GM12878 (cell line): ENCODE measurements at regions of chr7 and their contacts with region 1.

Region 1: DNA sequence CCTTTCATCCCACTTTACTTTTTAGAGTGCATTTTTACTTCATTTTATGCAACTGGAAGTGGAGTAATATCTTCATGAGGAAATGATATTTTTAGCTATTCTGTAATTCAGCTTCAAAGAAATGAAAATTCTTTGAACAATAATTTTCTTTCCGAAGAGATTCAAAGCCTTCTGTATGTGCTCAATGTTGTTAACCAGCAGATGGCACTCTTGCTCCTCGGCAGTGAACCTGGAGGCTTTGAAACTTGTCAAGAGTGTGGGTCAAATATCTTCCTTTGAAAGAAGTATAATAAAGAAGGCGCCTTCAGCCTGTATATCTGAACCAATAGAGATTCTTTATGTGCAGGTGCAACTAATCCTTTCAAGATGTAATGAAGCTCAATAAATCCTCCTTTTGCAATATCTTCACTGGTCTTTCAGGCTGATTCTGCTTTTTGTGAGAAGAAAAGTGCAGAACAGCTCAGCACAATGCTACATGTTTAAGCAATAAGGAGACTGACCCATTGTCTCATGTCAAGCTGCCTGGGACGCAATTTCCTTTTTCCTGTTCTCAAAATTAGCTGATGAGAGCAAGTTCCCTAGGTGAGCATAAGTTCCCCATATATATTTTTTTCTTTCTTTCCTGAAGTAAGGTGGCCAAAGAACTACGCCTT is 258.4 kb downstream of the SEMA3A start:
- DNase-seq: no peak
- ATAC-seq: peak; percentile 92
- H3K4me3 ChIP-seq: no peak overlapping the region
- H3K27ac ChIP-seq: no peak overlapping the region
- H3K4me1 ChIP-seq: no peaks in the 10 kb centered on the region
- H3K27me3 ChIP-seq: no peaks in the 10 kb centered on the region; a peak in 1 of 4 replicates
- CTCF ChIP-seq: peak; percentile 81 to 88 (median 88)
- EP300 ChIP-seq: no peak
- POLR2A ChIP-seq: no peak
- RAD21 ChIP-seq: peak; percentile 95

Region 2: DNA sequence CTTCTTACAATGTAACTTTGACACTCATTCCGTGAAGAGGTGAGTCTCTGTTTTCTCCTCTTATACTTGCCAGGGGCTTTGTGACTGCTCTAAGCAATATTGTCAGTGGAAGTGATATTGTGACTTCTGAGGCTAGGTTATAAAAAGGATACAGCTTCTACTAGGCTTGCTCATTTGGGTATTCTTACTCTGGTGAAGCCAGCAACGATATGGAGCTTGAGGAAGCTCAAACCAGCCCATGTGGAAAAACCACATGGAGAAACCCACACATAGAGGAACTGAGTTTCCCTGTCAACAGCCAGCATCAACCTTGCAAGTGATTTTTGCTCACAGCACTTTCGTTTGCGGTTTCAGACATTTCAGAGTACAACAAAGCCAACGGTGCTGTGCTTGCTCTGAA is 137.7 kb before region 1 on chr7:
- CTCF ChIA-PET with region 1: no interaction called
- POLR2A ChIA-PET with region 1: no interaction called
- RAD21 ChIA-PET with region 1: no interaction called
- SMC1A ChIA-PET with region 1: interaction called, 4 read pairs
- in situ Hi-C with region 1: no loop called
- intact Hi-C with region 1: loop called (anchors 5 kb)
- DNase-seq: peak; percentile 55
- ATAC-seq: peak; percentile 82
- H3K4me3 ChIP-seq: no peak overlapping the region
- H3K27ac ChIP-seq: peak overlapping the region; percentile 9; the same call in 1 of the 2 replicates
- H3K4me1 ChIP-seq: peaks cover 18% of the 10 kb centered on the region
- H3K27me3 ChIP-seq: no peaks in the 10 kb centered on the region
- CTCF ChIP-seq: no peak
- EP300 ChIP-seq: peak; percentile 30 to 55; a peak in 1 of 4 replicates
- POLR2A ChIP-seq: no peak
- RAD21 ChIP-seq: no peak

Region 3: GRCh38 chr7:83824214-83824613 is 112.0 kb before region 1 on chr7:
- CTCF ChIA-PET with region 1: no interaction called
- POLR2A ChIA-PET with region 1: no interaction called
- RAD21 ChIA-PET with region 1: no interaction called
- SMC1A ChIA-PET with region 1: no interaction called
- in situ Hi-C with region 1: no loop called
- intact Hi-C with region 1: no loop called
- DNase-seq: no peak
- ATAC-seq: no peak
- H3K4me3 ChIP-seq: no peak overlapping the region
- H3K27ac ChIP-seq: no peak overlapping the region
- H3K4me1 ChIP-seq: no peaks in the 10 kb centered on the region
- H3K27me3 ChIP-seq: no peaks in the 10 kb centered on the region
- CTCF ChIP-seq: no peak
- EP300 ChIP-seq: no peak
- POLR2A ChIP-seq: no peak
- RAD21 ChIP-seq: no peak

Region 4: DNA sequence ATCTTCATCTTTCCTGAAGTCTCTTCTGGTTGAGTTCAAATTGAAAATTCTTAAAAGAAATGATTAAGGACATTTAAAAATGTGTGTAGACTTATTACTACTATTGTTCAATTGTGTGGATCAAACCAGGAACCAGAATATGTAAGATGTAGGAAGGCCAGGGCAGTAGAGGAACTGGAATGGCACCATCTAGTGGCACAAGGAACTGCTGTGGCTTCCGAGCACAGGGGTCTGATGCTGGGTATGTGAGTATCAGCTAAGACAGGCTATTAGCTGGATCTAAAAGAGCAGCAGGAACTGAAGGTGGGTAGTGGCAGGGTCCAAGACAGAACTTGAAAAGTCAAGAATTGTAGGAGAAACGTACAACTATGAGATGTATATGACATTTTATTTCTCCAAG is 11.1 kb after region 1 on chr7:
- CTCF ChIA-PET with region 1: interaction called, 153 read pairs
- POLR2A ChIA-PET with region 1: no interaction called
- RAD21 ChIA-PET with region 1: interaction called, 4 read pairs
- SMC1A ChIA-PET with region 1: interaction called, 39 read pairs
- in situ Hi-C with region 1: no loop called
- intact Hi-C with region 1: no loop called
- DNase-seq: no peak
- ATAC-seq: peak; percentile 98
- H3K4me3 ChIP-seq: no peak overlapping the region
- H3K27ac ChIP-seq: no peak overlapping the region
- H3K4me1 ChIP-seq: no peaks in the 10 kb centered on the region
- H3K27me3 ChIP-seq: no peaks in the 10 kb centered on the region
- CTCF ChIP-seq: peak; percentile 49 to 70 (median 62)
- EP300 ChIP-seq: no peak
- POLR2A ChIP-seq: no peak
- RAD21 ChIP-seq: peak; percentile 54

Region 5: DNA sequence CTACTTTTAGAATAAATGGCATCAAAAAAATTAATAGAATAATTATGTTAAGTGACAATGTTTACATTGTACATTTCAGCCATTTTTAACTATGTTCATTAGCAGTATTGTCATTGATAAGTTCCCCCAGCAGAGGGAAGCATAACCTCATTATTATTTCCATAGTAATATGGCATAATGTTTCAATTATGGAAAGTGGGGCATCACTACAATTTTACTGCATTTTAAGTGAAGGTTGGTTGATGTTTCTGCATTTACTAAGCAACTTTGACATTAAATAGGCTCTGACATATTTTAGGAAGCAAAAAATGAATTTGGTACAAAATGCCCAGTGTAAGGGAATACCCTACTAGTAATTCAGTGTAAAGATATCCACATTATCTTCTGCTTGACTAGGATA is 40.1 kb after region 1 on chr7:
- CTCF ChIA-PET with region 1: interaction called, 16 read pairs
- POLR2A ChIA-PET with region 1: interaction called, 3 read pairs
- RAD21 ChIA-PET with region 1: interaction called, 6 read pairs
- SMC1A ChIA-PET with region 1: interaction called, 9 read pairs
- in situ Hi-C with region 1: no loop called
- intact Hi-C with region 1: loop called (anchors 5 kb)
- DNase-seq: no peak
- ATAC-seq: peak; percentile 86
- H3K4me3 ChIP-seq: no peak overlapping the region
- H3K27ac ChIP-seq: no peak overlapping the region
- H3K4me1 ChIP-seq: no peaks in the 10 kb centered on the region
- H3K27me3 ChIP-seq: no peaks in the 10 kb centered on the region
- CTCF ChIP-seq: peak; percentile 23 to 67 (median 40); a peak in 4 of 6 replicates
- EP300 ChIP-seq: no peak
- POLR2A ChIP-seq: no peak
- RAD21 ChIP-seq: peak; percentile 83

Region 6: GRCh38 chr7:84455788-84456187 is 519.6 kb after region 1 on chr7:
- CTCF ChIA-PET with region 1: interaction called, 14 read pairs
- POLR2A ChIA-PET with region 1: no interaction called
- RAD21 ChIA-PET with region 1: interaction called, 7 read pairs
- SMC1A ChIA-PET with region 1: interaction called, 4 read pairs
- in situ Hi-C with region 1: no loop called
- intact Hi-C with region 1: no loop called
- DNase-seq: no peak
- ATAC-seq: no peak
- H3K4me3 ChIP-seq: no peak overlapping the region
- H3K27ac ChIP-seq: no peak overlapping the region
- H3K4me1 ChIP-seq: no peaks in the 10 kb centered on the region
- H3K27me3 ChIP-seq: no peaks in the 10 kb centered on the region
- CTCF ChIP-seq: no peak
- EP300 ChIP-seq: no peak
- POLR2A ChIP-seq: no peak
- RAD21 ChIP-seq: no peak

Region 7: DNA sequence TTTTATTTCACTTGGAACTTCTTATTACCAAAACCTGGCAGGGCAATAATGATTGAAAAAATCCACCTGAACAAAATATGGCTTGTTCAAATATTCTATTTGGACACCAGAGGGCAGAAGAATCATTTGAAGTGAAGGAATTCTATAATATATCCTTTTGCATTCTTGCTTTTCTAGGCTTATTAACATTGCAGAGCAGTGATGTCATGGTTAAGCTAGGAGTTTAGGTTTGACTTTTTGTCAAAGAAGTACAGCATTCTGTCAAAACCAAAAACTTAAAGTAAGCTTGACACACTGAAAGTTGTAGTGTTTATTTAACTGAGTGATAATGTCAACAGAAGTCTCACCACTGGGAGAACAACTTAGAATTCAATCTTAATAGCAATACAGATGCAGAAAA is 1094.7 kb after region 1 on chr7:
- CTCF ChIA-PET with region 1: interaction called, 186 read pairs
- POLR2A ChIA-PET with region 1: no interaction called
- RAD21 ChIA-PET with region 1: interaction called, 79 read pairs
- SMC1A ChIA-PET with region 1: interaction called, 116 read pairs
- in situ Hi-C with region 1: no loop called
- intact Hi-C with region 1: no loop called
- DNase-seq: no peak
- ATAC-seq: peak; percentile 56
- H3K4me3 ChIP-seq: no peak overlapping the region
- H3K27ac ChIP-seq: no peak overlapping the region
- H3K4me1 ChIP-seq: no peaks in the 10 kb centered on the region
- H3K27me3 ChIP-seq: no peaks in the 10 kb centered on the region
- CTCF ChIP-seq: peak; percentile 22 to 52 (median 42); a peak in 5 of 6 replicates
- EP300 ChIP-seq: no peak
- POLR2A ChIP-seq: no peak
- RAD21 ChIP-seq: peak; percentile 44